ENCODE measurements at regions of chr13 and their contacts with region 1.

Region 1: GRCh38 chr13:49436890-49437289 is 7.0 kb downstream of the CAB39L start:
- DNase-seq: peak in 1 of 2 donors; percentile 71
- H3K4me3 ChIP-seq: no peak overlapping the region
- H3K27ac ChIP-seq: peak overlapping the region; percentile 28 to 30
- H3K4me1 ChIP-seq: peaks cover 0 to 4% of the 10 kb centered on the region in 2 donors
- H3K27me3 ChIP-seq: no peaks in the 10 kb centered on the region
- CTCF ChIP-seq: peak; percentile 37 to 50 (median 46)

Region 2: GRCh38 chr13:49146950-49147355 is 289.9 kb before region 1 on chr13:
- intact Hi-C with region 1: no loop called
- DNase-seq: no peak
- H3K4me3 ChIP-seq: no peak overlapping the region
- H3K27ac ChIP-seq: peak overlapping the region in 1 of 2 donors; percentile 26
- H3K4me1 ChIP-seq: no peaks in the 10 kb centered on the region
- H3K27me3 ChIP-seq: no peaks in the 10 kb centered on the region
- CTCF ChIP-seq: no peak

Region 3: GRCh38 chr13:49300739-49301589 is 135.9 kb before region 1 on chr13:
- intact Hi-C with region 1: loop called (anchors 1 kb)
- DNase-seq: peak in 1 of 2 donors; percentile 73
- H3K4me3 ChIP-seq: peak overlapping the region; percentile 42 to 49
- H3K27ac ChIP-seq: peak overlapping the region in 1 of 2 donors; percentile 35
- H3K4me1 ChIP-seq: peaks cover 0 to 6% of the 10 kb centered on the region in 2 donors
- H3K27me3 ChIP-seq: no peaks in the 10 kb centered on the region
- CTCF ChIP-seq: peak; percentile 81 to 91 (median 85)

Region 4: DNA sequence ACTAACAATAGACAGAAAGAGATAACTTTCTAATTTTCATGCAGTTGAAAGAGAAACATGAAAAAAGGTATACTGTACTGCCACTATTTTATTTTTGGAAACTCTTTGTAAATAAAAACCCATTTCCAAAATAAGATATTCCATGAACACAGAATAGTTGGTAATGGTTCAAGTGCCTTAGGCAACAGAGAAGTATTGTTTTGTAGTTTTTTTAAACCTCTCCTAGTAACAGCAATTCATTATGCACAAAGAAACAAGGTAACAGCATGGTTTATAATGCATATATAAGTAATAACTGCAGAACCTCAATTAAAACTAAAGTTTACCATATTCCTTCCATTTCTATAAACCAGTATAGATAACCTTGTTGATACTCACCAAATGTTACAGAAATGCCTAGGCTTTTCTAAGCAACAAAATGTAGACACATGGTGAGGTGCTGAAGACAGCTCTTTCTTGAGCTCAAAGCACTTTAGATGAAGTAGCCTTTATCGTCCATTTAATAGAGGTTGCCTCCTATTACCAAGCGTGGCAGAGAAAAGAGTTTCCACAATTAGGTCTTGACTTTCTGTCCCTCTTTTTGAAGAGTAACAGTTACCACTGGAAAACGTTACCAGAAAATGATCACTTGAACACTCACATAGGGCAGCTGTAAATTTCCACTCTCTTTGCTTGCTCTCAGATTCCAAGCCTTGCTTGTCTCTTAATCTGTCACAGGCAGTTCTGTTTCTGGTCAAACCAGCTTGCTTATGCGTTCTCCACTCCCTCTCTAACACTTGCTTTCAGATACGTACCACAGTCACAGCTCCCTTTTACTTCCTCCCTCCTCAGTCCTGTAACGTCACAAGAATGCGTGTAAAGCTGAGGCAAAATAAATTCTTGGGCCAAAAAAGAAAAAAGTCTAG is 35.9 kb before region 1 on chr13:
- intact Hi-C with region 1: loop called (anchors 2 kb)
- DNase-seq: peak in 1 of 2 donors; percentile 66
- H3K4me3 ChIP-seq: peak overlapping the region; percentile 40 to 64
- H3K27ac ChIP-seq: peak overlapping the region; percentile 84 to 86
- H3K4me1 ChIP-seq: peaks cover 0 to 5% of the 10 kb centered on the region in 2 donors
- H3K27me3 ChIP-seq: no peaks in the 10 kb centered on the region
- CTCF ChIP-seq: no peak

Region 5: DNA sequence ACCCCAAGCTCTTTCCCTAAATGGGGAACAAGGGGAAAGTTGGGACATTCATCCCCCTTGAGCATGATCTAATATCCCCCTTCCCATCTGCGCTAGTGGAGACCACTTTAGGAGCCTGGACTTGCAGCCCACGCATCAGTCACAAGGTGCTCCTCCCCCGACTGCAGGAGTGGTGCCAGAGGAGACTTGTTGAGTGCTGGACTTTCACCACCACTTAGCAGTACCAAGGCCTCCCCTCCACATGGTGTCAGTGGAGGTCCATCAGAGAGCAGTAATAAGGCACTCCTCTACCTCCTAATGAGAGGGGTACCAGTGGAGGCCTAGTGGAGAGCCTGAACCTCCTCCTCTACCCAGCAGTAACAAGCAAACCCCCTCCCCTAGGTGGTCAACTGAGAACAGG is 15.5 kb before region 1 on chr13:
- intact Hi-C with region 1: no loop called
- DNase-seq: no peak
- H3K4me3 ChIP-seq: no peak overlapping the region
- H3K27ac ChIP-seq: no peak overlapping the region
- H3K4me1 ChIP-seq: no peaks in the 10 kb centered on the region
- H3K27me3 ChIP-seq: no peaks in the 10 kb centered on the region
- CTCF ChIP-seq: no peak